ENCODE measurements at regions of chr17 and their contacts with region 1.

Region 1: DNA sequence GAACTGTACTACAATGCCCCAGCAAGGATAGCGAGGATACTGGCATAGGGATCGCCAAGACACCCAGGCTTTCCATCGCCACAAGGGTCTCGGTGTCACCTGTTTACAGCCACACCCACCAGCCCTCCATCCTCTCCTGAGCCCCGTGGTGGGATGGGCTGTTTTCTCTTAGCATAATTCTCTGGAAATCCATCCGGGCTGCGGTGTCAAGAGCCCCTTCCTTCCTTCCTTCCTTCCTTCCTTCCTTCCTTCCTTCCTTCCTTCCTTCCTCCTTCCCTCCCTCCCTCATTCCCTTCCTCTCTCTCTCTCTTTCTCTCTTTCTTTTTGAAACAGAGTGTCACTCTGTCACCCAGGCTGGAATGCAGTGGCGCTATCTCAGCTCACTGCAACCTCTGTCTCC is 36.0 kb upstream of the BAHCC1 start:
- DNase-seq: no peak
- H3K4me3 ChIP-seq: no peak overlapping the region
- H3K27ac ChIP-seq: no peak overlapping the region
- H3K27me3 ChIP-seq: peaks cover 11% of the 10 kb centered on the region
- CTCF ChIP-seq: no peak

Region 2: GRCh38 chr17:81346090-81346907 is 12.9 kb before region 1 on chr17:
- CTCF ChIA-PET with region 1: no interaction called
- POLR2A ChIA-PET with region 1: interaction called, 19 read pairs
- DNase-seq: peak; percentile 81
- H3K4me3 ChIP-seq: peak overlapping the region; percentile 97
- H3K27ac ChIP-seq: peak overlapping the region; percentile 73
- H3K27me3 ChIP-seq: no peaks in the 10 kb centered on the region
- CTCF ChIP-seq: no peak

Measured in AG04450 (cell line).